Dendritic cell treated with granulocyte-macrophage colony-stimulating factor and Interleukin-4, amounts not matched to agents 40 ng/mL and 50 ng/mL, for 4 days (primary cell): ENCODE measurements at regions of chrX and their contacts with region 1.

Region 1: DNA sequence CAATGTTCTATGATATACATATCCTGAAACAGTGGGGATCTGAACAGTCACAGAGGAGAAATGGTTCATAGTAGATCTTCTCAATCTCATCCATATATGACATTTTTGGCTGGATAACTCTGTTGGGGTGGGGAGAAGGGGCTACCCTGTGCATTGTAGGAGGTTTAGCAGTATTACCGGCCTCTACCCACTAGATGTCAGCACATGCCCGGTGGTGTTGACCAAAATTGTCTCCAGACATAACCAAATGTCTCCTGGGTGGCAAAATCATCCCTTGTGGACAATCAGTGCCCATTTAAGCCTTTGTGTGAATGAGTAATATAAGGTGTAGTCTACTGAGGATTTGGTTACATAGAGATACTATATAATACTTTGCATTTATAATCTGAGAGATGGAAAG is 89.9 kb downstream of the PLS3 start:
- H3K4me3 Mint-ChIP-seq: no peak overlapping the region
- H3K27ac Mint-ChIP-seq: no peak overlapping the region
- H3K4me1 Mint-ChIP-seq: no peaks in the 10 kb centered on the region
- H3K27me3 Mint-ChIP-seq: no peaks in the 10 kb centered on the region

Region 2: DNA sequence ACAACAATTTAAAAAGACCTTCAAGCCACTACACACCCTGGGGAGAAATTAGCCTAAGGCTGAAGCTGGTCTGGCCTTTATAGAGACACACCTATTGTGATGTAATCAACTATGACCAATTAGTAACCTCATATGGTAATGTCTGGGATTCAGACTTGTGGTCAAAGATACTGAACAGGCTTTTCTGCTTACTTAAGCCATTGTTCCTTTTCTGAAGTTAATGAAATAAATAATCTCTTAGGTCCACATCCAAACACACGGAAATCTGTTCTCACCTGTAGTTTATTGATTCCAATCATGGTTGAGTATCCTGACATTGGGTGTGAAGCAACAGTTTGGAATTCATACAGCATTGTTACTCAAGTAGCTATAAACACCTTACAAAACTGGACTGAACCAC is 62.6 kb after region 1 on chrX:
- intact Hi-C with region 1: no loop called
- H3K4me3 Mint-ChIP-seq: no peak overlapping the region
- H3K27ac Mint-ChIP-seq: no peak overlapping the region
- H3K4me1 Mint-ChIP-seq: no peaks in the 10 kb centered on the region
- H3K27me3 Mint-ChIP-seq: no peaks in the 10 kb centered on the region

Region 3: GRCh38 chrX:115898382-115899001 is 247.6 kb after region 1 on chrX:
- intact Hi-C with region 1: no loop called
- H3K4me3 Mint-ChIP-seq: no peak overlapping the region
- H3K27ac Mint-ChIP-seq: no peak overlapping the region
- H3K4me1 Mint-ChIP-seq: no peaks in the 10 kb centered on the region
- H3K27me3 Mint-ChIP-seq: no peaks in the 10 kb centered on the region

Region 4: DNA sequence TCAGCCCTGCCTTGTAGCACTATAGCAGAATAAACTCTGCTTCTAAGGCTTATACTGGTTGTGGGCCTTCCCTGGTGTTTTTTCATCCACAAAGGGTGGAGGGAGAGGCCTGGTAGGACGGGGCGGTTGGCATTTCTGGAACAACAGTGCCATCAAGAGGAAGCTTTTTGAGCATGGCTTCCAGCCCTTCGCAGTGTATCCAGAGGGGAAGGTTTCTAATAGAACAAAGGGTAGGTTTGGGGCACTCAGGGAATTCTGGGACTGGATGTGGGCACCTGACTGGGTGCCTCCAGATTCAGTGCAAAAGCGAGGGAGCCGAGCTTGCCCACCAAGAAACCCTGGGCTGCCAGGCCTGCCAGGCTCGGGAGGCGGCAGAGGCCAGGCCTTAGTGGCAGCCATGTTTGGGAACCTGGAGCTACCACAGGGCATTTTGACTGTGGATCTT is 290.0 kb after region 1 on chrX:
- intact Hi-C with region 1: loop called (anchors 2 kb)
- H3K4me3 Mint-ChIP-seq: no peak overlapping the region
- H3K27ac Mint-ChIP-seq: no peak overlapping the region
- H3K4me1 Mint-ChIP-seq: peaks cover 16% of the 10 kb centered on the region
- H3K27me3 Mint-ChIP-seq: no peaks in the 10 kb centered on the region